CD14-positive monocyte (primary cell): ENCODE measurements at regions of chr5 and their contacts with region 1.

Region 1: GRCh38 chr5:170360709-170361108 is 28.5 kb downstream of the KCNMB1 start:
- DNase-seq: peak; percentile 69 to 83 (median 82)
- H3K4me3 ChIP-seq: peak overlapping the region in 1 of 3 experiments; percentile 51
- H3K4me3 Mint-ChIP-seq: peak overlapping the region in 1 of 2 donors; percentile 63
- H3K27ac ChIP-seq: peak overlapping the region; percentile 84 to 96
- H3K27ac Mint-ChIP-seq: peak overlapping the region; percentile 90 to 99 (median 96)
- H3K4me1 ChIP-seq: peaks cover 93 to 100% of the 10 kb centered on the region in 2 donors
- H3K4me1 Mint-ChIP-seq: peaks cover 95% of the 10 kb centered on the region
- H3K27me3 ChIP-seq: no peaks in the 10 kb centered on the region
- H3K27me3 Mint-ChIP-seq: peaks cover 0 to 2% (median 1%) of the 10 kb centered on the region in 3 donors
- CTCF ChIP-seq: no peak

Region 2: DNA sequence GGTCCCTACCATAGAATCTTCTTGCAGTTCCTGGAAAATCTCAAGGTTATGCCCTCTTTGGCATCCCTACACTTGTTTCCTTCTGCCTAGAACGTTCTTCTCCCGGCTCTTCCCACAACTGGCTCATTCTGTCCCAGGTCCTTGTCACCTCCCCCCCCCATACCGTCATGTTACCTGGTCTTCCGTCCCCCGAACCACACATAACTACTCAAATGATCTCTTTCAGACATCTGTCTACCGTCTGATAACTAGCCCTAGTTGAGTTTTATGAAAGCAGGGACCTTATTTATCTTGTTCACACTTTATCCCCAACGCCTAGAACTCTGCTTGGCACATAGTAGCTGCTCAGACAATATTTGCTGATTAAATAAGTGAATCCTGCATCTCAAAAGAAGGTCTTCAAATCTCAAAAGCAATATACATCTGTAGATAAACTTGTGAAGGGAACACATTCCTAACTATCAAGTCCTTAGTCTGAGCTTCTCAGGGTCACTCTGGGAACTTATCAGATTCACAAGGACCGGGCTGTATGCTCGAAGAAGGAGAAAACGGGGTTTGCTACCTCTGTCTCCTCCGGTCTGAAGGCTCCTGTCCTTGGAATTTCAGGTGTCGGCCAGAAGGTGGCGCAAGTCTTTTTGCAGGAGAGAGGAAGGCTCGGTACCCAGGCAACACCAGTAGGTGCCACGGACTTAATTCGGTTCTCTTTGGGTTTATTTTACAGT is 93.1 kb before region 1 on chr5:
- intact Hi-C with region 1: no loop called
- DNase-seq: peak; percentile 77 to 83 (median 79)
- H3K4me3 ChIP-seq: no peak overlapping the region
- H3K4me3 Mint-ChIP-seq: peak overlapping the region in 1 of 2 donors; percentile 24
- H3K27ac ChIP-seq: peak overlapping the region in 1 of 2 donors; percentile 97
- H3K27ac Mint-ChIP-seq: peak overlapping the region; percentile 76 to 100 (median 98)
- H3K4me1 ChIP-seq: peaks cover 47 to 48% of the 10 kb centered on the region in 2 donors
- H3K4me1 Mint-ChIP-seq: peaks cover 49% of the 10 kb centered on the region
- H3K27me3 ChIP-seq: no peaks in the 10 kb centered on the region
- H3K27me3 Mint-ChIP-seq: peaks cover 0 to 1% (median 0%) of the 10 kb centered on the region in 3 donors
- CTCF ChIP-seq: peak; percentile 83

Region 3: GRCh38 chr5:170397059-170397458 is 36.4 kb after region 1 on chr5:
- intact Hi-C with region 1: loop called in 1 of 2 experiments (anchors 5 kb)
- DNase-seq: no peak
- H3K4me3 ChIP-seq: no peak overlapping the region
- H3K4me3 Mint-ChIP-seq: no peak overlapping the region
- H3K27ac ChIP-seq: no peak overlapping the region
- H3K27ac Mint-ChIP-seq: no peak overlapping the region
- H3K4me1 ChIP-seq: peaks cover 22 to 25% of the 10 kb centered on the region in 2 donors
- H3K4me1 Mint-ChIP-seq: peaks cover 25% of the 10 kb centered on the region
- H3K27me3 ChIP-seq: no peaks in the 10 kb centered on the region
- H3K27me3 Mint-ChIP-seq: peaks cover 0 to 5% (median 4%) of the 10 kb centered on the region in 3 donors
- CTCF ChIP-seq: no peak

Region 4: DNA sequence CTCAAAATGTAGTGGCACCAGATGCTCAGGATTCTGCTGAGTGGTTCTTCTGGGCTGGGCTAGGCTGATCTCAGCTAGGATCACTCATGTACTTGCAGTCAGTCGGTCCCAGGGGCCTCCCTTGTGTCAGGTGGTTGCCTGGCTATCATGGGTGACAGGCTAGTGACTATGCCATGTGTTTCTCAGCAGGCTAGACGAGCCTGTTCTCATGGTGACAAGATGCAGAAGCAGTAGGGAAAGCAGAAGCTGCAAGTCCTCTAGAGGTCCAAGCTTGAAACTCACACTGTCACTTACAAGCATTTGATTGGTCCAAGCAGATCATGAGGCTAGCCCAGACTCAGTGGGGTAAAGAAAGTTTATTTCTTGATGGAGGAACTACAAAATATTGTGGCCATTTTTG is 43.7 kb after region 1 on chr5:
- intact Hi-C with region 1: loop called (anchors 5 kb)
- DNase-seq: peak; percentile 93 to 96 (median 95)
- H3K4me3 ChIP-seq: no peak overlapping the region
- H3K4me3 Mint-ChIP-seq: no peak overlapping the region
- H3K27ac ChIP-seq: peak overlapping the region; percentile 14 to 60
- H3K27ac Mint-ChIP-seq: peak overlapping the region; percentile 70 to 94 (median 89)
- H3K4me1 ChIP-seq: peaks cover 26 to 29% of the 10 kb centered on the region in 2 donors
- H3K4me1 Mint-ChIP-seq: peaks cover 32% of the 10 kb centered on the region
- H3K27me3 ChIP-seq: no peaks in the 10 kb centered on the region
- H3K27me3 Mint-ChIP-seq: peaks cover 0 to 4% (median 2%) of the 10 kb centered on the region in 3 donors
- CTCF ChIP-seq: no peak